ENCODE measurements at regions of chr12 and their contacts with region 1.

Region 1: GRCh38 chr12:109428037-109428629 is 49.0 kb downstream of the KCTD10 start:
- DNase-seq: peak; percentile 82
- H3K4me3 Mint-ChIP-seq: no peak overlapping the region
- H3K27ac Mint-ChIP-seq: no peak overlapping the region
- H3K4me1 Mint-ChIP-seq: peaks cover 6% of the 10 kb centered on the region
- H3K27me3 Mint-ChIP-seq: no peaks in the 10 kb centered on the region

Region 2: DNA sequence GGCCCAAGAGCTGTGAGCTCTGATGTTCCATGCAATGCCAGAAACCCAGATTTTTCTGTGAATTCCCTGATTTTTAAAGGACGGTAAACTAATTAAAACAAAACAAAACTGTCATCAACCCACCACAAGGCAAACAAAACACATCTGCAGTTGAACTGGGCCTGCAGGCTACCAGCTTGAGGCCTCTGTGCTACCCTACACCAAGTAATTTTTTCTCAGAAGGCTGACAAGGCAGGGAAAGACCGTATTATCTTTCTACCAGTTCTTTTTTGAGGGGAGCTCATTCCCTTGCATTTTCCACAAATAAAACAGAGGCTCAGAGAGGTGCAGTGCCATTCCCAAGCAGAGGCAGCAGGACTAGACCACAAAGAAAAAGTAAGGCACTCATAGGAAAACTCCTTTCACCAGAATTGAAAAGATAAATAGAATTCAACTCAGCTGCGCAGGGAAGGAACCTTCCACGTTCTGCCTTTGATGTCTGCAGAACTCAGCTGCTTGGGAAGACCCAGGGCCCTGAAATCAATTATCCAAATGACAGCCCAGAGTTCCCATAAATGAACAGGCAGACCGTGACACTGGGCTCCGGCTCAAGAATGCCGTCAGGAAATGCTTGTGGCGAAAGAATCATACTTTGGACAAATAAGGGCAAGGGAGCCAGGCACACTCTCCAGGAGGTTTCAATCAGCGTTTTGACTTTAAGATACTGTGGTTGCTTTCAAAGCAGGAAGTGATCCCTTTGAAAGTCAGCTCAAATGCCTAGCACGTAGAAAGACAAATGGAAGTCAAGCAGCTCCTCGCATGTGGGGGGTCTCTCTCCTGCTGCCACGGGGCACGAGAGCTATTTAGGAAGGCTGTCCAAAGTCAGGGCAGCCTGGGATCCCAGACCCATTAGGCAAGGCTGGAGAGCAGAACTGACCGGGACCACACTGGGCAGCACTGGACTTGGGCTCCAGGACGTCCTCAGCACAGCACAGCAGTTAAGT is 34.9 kb after region 1 on chr12:
- CTCF ChIA-PET with region 1: interaction called, 12 read pairs
- intact Hi-C with region 1: no loop called
- DNase-seq: no peak
- H3K4me3 Mint-ChIP-seq: no peak overlapping the region
- H3K27ac Mint-ChIP-seq: no peak overlapping the region
- H3K4me1 Mint-ChIP-seq: peaks cover 37% of the 10 kb centered on the region
- H3K27me3 Mint-ChIP-seq: no peaks in the 10 kb centered on the region

Region 3: DNA sequence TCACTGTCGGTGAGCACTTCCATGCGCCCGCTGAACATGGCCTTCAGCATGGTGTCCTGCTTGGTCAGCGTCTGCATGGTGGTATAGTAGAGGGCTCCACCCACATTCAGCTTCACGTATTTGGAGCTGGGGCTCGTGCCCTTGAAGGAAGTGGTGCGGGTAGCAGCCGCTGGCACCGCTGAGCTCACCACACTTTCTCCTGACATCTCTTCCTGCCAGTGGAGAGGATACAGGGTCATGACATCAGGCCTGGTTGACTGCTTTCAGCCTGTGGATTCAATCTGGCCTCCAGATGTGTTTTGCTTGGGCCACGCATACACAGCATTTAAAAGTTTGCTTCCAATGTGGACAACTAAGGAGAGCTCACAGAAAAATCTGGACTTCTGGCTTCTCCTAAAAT is 41.4 kb after region 1 on chr12:
- CTCF ChIA-PET with region 1: interaction called, 10 read pairs
- intact Hi-C with region 1: no loop called
- DNase-seq: no peak
- H3K4me3 Mint-ChIP-seq: no peak overlapping the region
- H3K27ac Mint-ChIP-seq: no peak overlapping the region
- H3K4me1 Mint-ChIP-seq: peaks cover 20% of the 10 kb centered on the region
- H3K27me3 Mint-ChIP-seq: no peaks in the 10 kb centered on the region

Region 4: DNA sequence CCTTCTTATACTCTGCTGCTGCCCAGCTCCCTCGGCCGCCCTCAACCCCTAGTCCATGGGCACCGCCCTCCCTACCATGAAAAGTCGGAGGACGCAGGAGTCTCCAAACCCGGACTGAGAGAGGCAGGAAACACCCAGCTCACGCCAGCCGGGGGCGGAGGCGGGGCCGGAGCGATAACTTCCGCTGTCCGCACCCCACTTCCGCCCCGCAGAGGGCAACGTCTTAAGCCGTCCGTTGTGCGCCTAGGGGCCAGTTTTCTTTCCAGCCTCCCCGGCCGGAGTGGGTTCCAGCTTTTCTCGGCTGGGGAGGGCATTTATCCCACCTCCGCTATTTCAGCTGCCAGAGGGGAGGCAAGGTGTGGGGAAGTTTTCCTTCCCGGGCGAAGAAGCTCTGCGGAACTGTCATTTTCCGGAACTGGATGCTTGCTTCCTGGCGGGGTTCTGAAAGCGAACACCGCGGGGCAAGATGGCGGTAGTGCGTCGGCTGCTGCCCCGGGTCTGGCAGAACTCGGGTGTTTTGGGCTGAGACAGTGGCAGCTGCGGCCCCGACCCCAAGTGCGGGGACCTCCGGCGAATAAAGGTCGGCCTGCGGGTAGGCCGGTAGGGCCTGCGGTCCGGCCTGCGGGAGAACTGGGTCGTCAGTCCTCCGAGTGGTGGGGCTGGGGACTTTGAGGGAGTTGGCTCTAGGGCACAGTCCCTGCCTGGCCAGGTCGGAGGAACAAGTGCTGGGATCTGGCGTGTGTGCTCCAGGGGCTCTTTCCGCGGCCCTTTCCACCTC is 49.2 kb after region 1 on chr12 and contains the starts of genes KCTD10 and UBE3B:
- CTCF ChIA-PET with region 1: interaction called, 5 read pairs
- intact Hi-C with region 1: loop called (anchors 2 kb)
- DNase-seq: peak; percentile 87
- H3K4me3 Mint-ChIP-seq: peak within 1 kb of the TSS; percentile 97
- H3K27ac Mint-ChIP-seq: peak within 1 kb of the TSS; percentile 98
- H3K4me1 Mint-ChIP-seq: peaks cover 49% of the 10 kb centered on the region
- H3K27me3 Mint-ChIP-seq: no peaks in the 10 kb centered on the region
- total RNA-seq, gene KCTD10: 31.1 to 33.4 TPM
- total RNA-seq, gene UBE3B: 26.2 to 26.6 TPM

Region 5: DNA sequence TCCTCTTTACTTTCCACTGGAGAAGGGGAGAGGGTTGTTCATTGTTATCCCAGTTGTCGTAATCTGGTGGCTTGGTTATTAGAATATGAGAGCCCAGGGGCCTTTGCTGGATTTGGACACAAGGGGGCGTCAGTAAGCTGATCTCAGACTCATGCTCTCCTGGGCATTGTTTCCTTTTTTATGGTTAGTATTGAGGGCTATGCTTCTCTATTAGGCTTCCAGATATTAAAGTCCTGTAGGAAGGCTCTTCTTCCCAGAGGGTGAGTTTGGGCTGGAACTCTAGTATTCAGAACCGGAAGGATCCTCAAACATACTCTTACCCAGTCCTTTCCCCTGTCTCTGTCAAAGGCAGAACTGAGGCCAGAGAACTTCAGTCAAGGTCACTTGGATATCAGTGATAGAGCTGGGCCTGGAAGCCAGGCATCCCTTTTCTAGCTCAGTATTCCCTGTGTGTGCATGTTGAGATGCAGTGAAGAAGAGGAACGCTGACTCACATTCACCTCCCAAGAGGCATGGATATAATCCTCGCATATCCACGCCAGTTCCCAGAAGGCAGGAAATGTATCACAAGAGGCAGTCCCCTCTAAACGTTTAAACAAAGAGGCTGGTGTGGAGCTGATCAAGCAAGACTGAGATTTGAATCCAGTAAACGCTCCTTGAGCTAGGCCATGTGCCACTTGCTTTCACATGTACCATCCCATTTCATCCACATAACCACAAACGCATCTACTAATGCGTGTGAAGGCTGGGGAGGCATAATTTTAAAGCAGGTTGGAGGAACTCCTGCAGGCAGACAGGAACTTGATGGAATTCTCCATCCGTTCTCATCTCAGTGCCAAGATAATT is 90.9 kb after region 1 on chr12:
- CTCF ChIA-PET with region 1: interaction called, 5 read pairs
- intact Hi-C with region 1: loop called (anchors 2 kb)
- DNase-seq: peak; percentile 77
- H3K4me3 Mint-ChIP-seq: no peak overlapping the region
- H3K27ac Mint-ChIP-seq: no peak overlapping the region
- H3K4me1 Mint-ChIP-seq: no peaks in the 10 kb centered on the region
- H3K27me3 Mint-ChIP-seq: no peaks in the 10 kb centered on the region

Region 6: DNA sequence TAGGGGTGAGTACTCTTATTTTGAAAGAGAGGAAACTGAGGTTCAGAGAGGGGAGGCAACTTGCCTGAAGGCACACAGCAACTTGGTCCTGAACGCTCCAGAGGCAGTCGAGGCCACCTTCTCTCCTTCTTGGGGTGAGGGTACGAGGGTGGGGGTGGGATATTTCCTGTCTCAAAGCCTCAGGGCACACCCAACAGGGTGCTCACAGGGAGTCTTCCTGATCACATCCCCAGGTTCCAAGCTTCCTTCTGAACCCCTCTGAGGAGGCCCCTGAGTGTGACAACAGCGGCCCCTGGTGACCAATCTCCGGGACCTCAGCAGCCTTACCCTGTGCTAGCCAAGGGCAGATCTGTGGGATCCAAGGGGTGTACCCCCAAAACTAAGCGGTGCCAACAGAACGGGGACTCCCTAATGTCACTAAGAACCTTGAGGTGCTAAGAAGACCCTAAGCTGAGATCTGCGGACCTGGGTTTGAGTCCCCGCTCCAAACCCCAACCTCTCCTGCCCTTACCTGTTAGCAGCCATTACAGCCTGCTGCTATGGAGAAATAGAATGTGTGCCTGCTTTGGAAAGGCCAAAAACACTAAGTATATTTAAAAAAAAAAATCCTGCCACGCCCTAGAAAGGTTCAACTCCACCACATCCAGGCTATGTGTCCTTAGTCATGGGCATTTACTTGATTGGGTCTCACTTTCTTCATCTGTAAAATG is 347.2 kb after region 1 on chr12:
- CTCF ChIA-PET with region 1: interaction called, 16 read pairs
- intact Hi-C with region 1: loop called (anchors 1 kb)
- DNase-seq: peak; percentile 84
- H3K4me3 Mint-ChIP-seq: no peak overlapping the region
- H3K27ac Mint-ChIP-seq: no peak overlapping the region
- H3K4me1 Mint-ChIP-seq: peaks cover 9% of the 10 kb centered on the region
- H3K27me3 Mint-ChIP-seq: no peaks in the 10 kb centered on the region